ENCODE measurements at regions of chr15 and their contacts with region 1.

Region 1: DNA sequence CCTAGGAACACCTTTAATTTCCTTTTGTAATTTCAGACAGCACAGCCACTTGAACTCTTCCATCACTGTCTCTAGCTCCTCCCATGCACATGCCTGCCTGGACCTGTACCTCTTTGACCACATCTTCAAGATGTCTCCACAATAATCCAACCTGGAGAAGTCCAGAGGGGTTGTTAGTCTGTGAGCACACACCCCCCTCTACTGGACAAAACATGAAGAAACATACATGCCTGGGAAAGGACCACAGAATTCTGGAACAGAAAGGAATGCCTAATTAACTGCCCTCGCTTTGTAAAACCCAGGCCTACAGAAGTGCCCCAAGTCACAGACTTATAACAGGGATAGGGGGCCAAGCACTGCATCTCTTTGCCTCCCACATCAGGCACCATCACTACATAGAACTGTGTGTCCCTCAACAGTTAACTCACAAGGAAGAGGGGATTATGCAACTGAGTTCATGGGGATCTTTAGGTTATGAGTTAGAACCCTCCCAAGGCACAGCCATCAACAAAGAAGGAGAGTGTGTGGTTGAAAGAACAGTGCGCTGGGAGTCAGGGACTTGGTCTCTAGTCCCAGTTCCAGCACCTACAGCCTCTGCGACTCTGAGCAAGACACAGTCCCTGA is 61.7 kb downstream of the FMN1 start:
- DNase-seq: no peak
- ATAC-seq: peak; percentile 59 to 66
- H3K4me3 ChIP-seq: no peak overlapping the region
- H3K27ac ChIP-seq: no peak overlapping the region
- H3K4me1 ChIP-seq: no peaks in the 10 kb centered on the region
- H3K27me3 ChIP-seq: no peaks in the 10 kb centered on the region

Region 2: GRCh38 chr15:32651229-32651837 is 481.5 kb before region 1 on chr15:
- intact Hi-C with region 1: loop called in 1 of 4 experiments (anchors 10 kb)
- DNase-seq: no peak
- ATAC-seq: peak; percentile 39 to 45
- H3K4me3 ChIP-seq: no peak overlapping the region
- H3K27ac ChIP-seq: no peak overlapping the region
- H3K4me1 ChIP-seq: no peaks in the 10 kb centered on the region
- H3K27me3 ChIP-seq: no peaks in the 10 kb centered on the region

Region 3: GRCh38 chr15:33021806-33022389 is 110.9 kb before region 1 on chr15:
- intact Hi-C with region 1: loop called in 2 of 4 experiments (anchors 10 kb)
- DNase-seq: no peak
- ATAC-seq: peak; percentile 72 to 74
- H3K4me3 ChIP-seq: no peak overlapping the region
- H3K27ac ChIP-seq: no peak overlapping the region
- H3K4me1 ChIP-seq: peaks cover 3% of the 10 kb centered on the region
- H3K27me3 ChIP-seq: no peaks in the 10 kb centered on the region

Region 4: GRCh38 chr15:33074942-33075341 is 57.9 kb before region 1 on chr15:
- intact Hi-C with region 1: loop called in 1 of 4 experiments (anchors 10 kb)
- DNase-seq: no peak
- ATAC-seq: no peak
- H3K4me3 ChIP-seq: no peak overlapping the region
- H3K27ac ChIP-seq: no peak overlapping the region
- H3K4me1 ChIP-seq: no peaks in the 10 kb centered on the region
- H3K27me3 ChIP-seq: no peaks in the 10 kb centered on the region

Region 5: GRCh38 chr15:33086507-33087121 is 46.2 kb before region 1 on chr15:
- intact Hi-C with region 1: loop called in 2 of 4 experiments (anchors 5 kb)
- DNase-seq: no peak
- ATAC-seq: no peak
- H3K4me3 ChIP-seq: no peak overlapping the region
- H3K27ac ChIP-seq: no peak overlapping the region
- H3K4me1 ChIP-seq: no peaks in the 10 kb centered on the region
- H3K27me3 ChIP-seq: no peaks in the 10 kb centered on the region

Region 6: GRCh38 chr15:33194704-33195670 is 62.2 kb after region 1 on chr15 and contains the start of gene FMN1:
- intact Hi-C with region 1: loop called in 1 of 4 experiments (anchors 10 kb)
- DNase-seq: peak; percentile 95 to 98 (median 98)
- ATAC-seq: peak; percentile 100
- H3K4me3 ChIP-seq: peak within 1 kb of the TSS; percentile 47
- H3K27ac ChIP-seq: no peak within 1 kb of the TSS
- H3K4me1 ChIP-seq: no peaks in the 10 kb centered on the region
- H3K27me3 ChIP-seq: no peaks in the 10 kb centered on the region
- total RNA-seq, gene FMN1: 1.7 to 8.5 (median 3.5) TPM